Naive thymus-derived CD4-positive, alpha-beta T cell (primary cell): ENCODE measurements at regions of chr3 and their contacts with region 1.

Region 1: DNA sequence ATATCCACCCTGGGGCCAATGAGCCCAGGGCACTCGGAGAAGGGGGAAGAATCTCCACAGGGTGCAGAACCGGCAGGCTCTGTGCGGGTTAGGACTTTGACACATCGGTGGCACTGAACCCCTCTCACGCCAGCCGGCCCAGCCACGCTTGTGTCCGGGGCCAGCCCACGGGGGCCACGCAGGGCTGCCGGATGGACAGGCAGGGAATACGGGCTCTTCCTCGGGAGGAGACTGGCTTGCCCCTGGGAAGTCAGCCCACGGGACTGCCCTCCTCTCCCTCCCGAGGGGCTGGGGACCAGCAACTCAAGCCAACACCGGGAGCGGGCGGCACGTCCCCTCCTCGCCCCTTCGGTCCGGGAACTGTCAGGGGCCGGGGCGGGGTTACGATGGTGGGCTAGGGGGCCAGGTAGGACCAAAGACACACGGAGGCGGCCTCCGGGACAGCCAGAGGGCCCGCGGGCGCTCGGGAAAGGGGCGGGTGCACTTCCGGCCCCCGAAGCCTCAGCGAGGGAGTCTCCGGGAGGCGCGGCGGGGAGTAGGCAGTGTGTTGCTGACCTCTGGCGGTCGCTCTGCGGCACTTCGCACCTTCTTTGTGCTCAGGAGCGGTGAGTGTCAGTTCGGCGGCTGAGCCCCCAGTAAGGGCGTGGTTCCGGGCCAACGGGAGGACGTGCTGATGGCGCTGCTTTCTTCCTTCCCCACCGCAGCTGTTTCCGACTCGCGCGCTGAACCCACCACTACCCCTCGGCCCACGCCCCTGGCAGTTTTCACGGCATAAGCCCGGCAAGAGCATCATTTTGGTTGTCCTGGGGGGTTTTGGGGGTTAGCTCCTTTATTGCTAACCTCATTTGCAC is 5.1 kb upstream of the CYP8B1 start:
- DNase-seq: peak; percentile 66 to 87 (median 83)
- ATAC-seq: peak; percentile 99
- H3K4me3 ChIP-seq: peak overlapping the region; percentile 64
- H3K4me3 Mint-ChIP-seq: peak overlapping the region; percentile 76 to 89 (median 85)
- H3K27ac ChIP-seq: peak overlapping the region; percentile 57
- H3K27ac Mint-ChIP-seq: peak overlapping the region; percentile 55 to 97 (median 82)
- H3K4me1 ChIP-seq: peaks cover 4 to 13% of the 10 kb centered on the region in 2 donors
- H3K4me1 Mint-ChIP-seq: peaks cover 6 to 17% (median 15%) of the 10 kb centered on the region in 7 donors
- H3K27me3 ChIP-seq: no peaks in the 10 kb centered on the region
- H3K27me3 Mint-ChIP-seq: peaks cover 0 to 25% (median 0%) of the 10 kb centered on the region in 5 donors

Region 2: DNA sequence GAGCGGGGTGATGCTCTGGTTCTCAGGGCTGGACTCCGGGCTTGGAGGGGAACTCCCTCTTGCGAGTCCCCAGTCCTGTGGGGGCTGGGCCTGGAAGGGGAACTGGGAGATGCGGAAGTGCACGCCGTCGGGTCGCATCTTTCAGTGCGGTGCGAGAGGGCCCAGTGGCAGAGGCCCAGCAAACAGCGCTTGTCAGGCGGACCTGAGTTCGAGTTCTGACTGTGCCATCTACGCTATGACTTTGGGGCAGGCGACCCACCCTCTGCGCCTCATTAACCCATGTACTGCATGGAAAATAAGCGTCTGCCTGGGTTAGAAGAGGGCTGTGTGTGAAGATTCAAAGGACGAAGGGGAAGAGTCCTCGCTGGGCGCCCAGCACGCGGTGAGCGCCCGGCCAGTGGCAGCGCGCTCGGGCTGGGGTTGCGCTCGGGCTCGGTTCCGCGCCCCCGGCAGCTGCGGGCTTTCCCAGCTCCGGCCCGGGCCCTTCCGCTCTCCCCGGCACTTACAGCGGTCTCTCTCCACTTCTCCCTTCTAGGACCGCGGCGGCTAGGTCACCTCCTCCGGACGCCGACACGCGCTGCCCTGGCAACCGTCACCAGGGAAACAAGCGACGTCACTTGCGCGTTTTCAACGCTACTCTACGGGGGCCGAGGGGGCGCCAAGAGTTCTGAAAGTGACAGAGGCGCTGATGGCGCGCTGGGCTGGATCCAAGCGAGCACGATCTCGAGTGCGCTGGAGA is 108.0 kb before region 1 on chr3 and contains the start of gene CCDC13:
- CTCF ChIA-PET with region 1: no interaction called
- POLR2A ChIA-PET with region 1: no interaction called
- intact Hi-C with region 1: loop called in 1 of 2 experiments (anchors 2 kb)
- DNase-seq: peak; percentile 72 to 88 (median 75)
- ATAC-seq: peak; percentile 91
- H3K4me3 ChIP-seq: peak within 1 kb of the TSS; percentile 70
- H3K4me3 Mint-ChIP-seq: peak within 1 kb of the TSS; percentile 84 to 93 (median 90)
- H3K27ac ChIP-seq: no peak within 1 kb of the TSS
- H3K27ac Mint-ChIP-seq: peak within 1 kb of the TSS in 8 of 9 donors; percentile 13 to 93 (median 87)
- H3K4me1 ChIP-seq: peaks cover 5 to 6% of the 10 kb centered on the region in 2 donors
- H3K4me1 Mint-ChIP-seq: peaks cover 9 to 13% (median 12%) of the 10 kb centered on the region in 7 donors
- H3K27me3 ChIP-seq: no peaks in the 10 kb centered on the region
- H3K27me3 Mint-ChIP-seq: peaks cover 0 to 16% (median 0%) of the 10 kb centered on the region in 5 donors
- total RNA-seq, gene CCDC13: 0.34 to 1.5 (median 0.70) TPM

Region 3: GRCh38 chr3:42780892-42781700 is 99.7 kb before region 1 on chr3:
- CTCF ChIA-PET with region 1: interaction called, 16 read pairs
- POLR2A ChIA-PET with region 1: no interaction called
- intact Hi-C with region 1: loop called (anchors 1 kb)
- DNase-seq: peak in 7 of 9 donors; percentile 41 to 67 (median 54)
- ATAC-seq: peak; percentile 87
- H3K4me3 ChIP-seq: no peak overlapping the region
- H3K4me3 Mint-ChIP-seq: no peak overlapping the region
- H3K27ac ChIP-seq: no peak overlapping the region
- H3K27ac Mint-ChIP-seq: peak overlapping the region in 2 of 9 donors; percentile 14
- H3K4me1 ChIP-seq: no peaks in the 10 kb centered on the region
- H3K4me1 Mint-ChIP-seq: peaks cover 0 to 5% (median 0%) of the 10 kb centered on the region in 7 donors
- H3K27me3 ChIP-seq: no peaks in the 10 kb centered on the region
- H3K27me3 Mint-ChIP-seq: no peaks in the 10 kb centered on the region

Region 4: DNA sequence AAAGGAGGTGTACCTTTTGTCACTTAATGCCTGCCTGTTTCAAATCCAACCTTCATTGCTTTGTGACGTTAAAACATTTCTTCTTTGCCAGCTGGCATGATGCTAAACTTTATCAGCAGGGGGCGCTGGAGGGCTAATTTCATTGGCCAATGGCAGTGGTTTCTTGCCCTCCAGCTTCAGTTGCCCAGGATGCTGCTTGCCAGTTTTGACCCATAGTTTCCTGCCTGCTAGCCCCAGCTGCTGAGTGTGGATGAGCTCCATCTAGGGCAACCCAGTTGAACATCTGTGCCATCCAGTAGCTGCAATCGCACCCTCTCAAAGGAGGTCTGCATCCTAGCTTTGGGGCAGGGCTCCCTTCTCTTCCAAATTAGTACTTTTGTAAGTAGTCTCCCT is 49.5 kb before region 1 on chr3:
- CTCF ChIA-PET with region 1: interaction called, 3 read pairs
- POLR2A ChIA-PET with region 1: no interaction called
- intact Hi-C with region 1: loop called (anchors 1 kb)
- DNase-seq: peak; percentile 45 to 71 (median 65)
- ATAC-seq: peak; percentile 81
- H3K4me3 ChIP-seq: no peak overlapping the region
- H3K4me3 Mint-ChIP-seq: no peak overlapping the region
- H3K27ac ChIP-seq: no peak overlapping the region
- H3K27ac Mint-ChIP-seq: peak overlapping the region in 1 of 9 donors; percentile 12
- H3K4me1 ChIP-seq: no peaks in the 10 kb centered on the region
- H3K4me1 Mint-ChIP-seq: peaks cover 0 to 14% (median 5%) of the 10 kb centered on the region in 7 donors
- H3K27me3 ChIP-seq: no peaks in the 10 kb centered on the region
- H3K27me3 Mint-ChIP-seq: peaks cover 0 to 18% (median 4%) of the 10 kb centered on the region in 5 donors

Region 5: GRCh38 chr3:42839616-42840015 is 41.2 kb before region 1 on chr3:
- CTCF ChIA-PET with region 1: no interaction called
- POLR2A ChIA-PET with region 1: no interaction called
- intact Hi-C with region 1: loop called (anchors 2 kb)
- DNase-seq: peak in 7 of 9 donors; percentile 19 to 58 (median 51)
- ATAC-seq: peak; percentile 96
- H3K4me3 ChIP-seq: no peak overlapping the region
- H3K4me3 Mint-ChIP-seq: no peak overlapping the region
- H3K27ac ChIP-seq: no peak overlapping the region
- H3K27ac Mint-ChIP-seq: no peak overlapping the region
- H3K4me1 ChIP-seq: no peaks in the 10 kb centered on the region
- H3K4me1 Mint-ChIP-seq: peaks cover 0 to 4% (median 0%) of the 10 kb centered on the region in 7 donors
- H3K27me3 ChIP-seq: no peaks in the 10 kb centered on the region
- H3K27me3 Mint-ChIP-seq: peaks cover 0 to 5% (median 3%) of the 10 kb centered on the region in 5 donors